ENCODE measurements at regions of chr2 and their contacts with region 1.

Region 1: GRCh38 chr2:54617409-54617808 is 106.1 kb upstream of the EML6 start:
- DNase-seq: no peak
- H3K4me3 ChIP-seq: no peak overlapping the region
- CTCF ChIP-seq: no peak

Region 2: DNA sequence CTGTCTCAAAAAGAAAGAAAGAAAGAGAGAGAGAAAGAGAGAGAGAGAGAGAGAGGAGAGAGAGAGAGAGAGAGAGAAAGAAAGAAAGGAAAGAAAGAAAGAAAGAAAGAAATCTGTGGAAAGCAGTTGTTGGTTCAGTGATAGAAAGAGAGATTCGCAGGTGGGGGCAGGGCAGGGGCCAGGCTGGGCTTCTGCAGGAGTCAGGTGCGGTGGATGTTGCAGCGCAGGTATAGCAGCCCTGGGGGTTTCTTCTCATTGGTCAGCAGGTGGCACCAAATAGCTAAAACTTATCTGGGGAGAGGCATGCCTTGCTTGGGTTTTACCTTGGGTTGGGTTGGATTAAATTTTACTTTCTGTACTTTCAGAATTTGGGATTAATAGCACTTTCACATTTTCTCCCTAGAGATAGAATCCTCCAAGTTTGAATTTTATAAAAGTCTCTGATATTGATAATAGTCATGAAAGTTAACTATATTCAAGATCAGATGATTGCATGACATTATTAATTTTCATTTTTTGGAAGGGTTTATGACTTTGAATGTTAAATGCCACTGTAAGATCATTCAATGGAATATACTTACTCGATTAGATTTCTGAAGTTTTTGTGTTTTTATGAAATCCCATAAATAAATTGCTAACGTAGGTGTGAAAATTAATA is 94.7 kb before region 1 on chr2:
- CTCF ChIA-PET with region 1: interaction called, 11 read pairs
- POLR2A ChIA-PET with region 1: no interaction called
- DNase-seq: no peak
- H3K4me3 ChIP-seq: no peak overlapping the region
- CTCF ChIP-seq: peak; percentile 50